ENCODE measurements at regions of chr1 and their contacts with region 1.

Region 1: GRCh38 chr1:72037745-72038343 is 244.5 kb downstream of the NEGR1 start:
- DNase-seq: peak; percentile 41
- H3K4me3 ChIP-seq: no peak overlapping the region
- CTCF ChIP-seq: peak; percentile 64

Region 2: DNA sequence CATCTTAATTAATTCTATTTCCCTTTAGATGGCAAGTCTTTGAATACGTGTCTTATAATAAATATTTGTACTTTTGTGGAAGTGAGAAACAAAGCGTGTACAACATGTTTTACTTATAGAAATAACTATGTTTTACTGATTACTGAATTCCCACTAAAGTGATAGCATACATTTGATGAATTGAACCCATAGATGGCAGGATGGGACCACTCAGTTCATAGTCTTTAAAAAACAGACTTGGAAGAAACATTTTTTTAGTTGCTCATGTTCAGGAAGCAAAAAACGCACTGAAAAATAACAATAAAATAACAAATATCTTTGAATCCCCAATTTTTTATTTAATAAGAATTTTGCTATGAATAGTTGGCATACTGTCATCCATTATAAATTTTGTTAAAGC is 449.9 kb before region 1 on chr1:
- in situ Hi-C with region 1: loop called (anchors 25 kb)
- DNase-seq: peak; percentile 26
- H3K4me3 ChIP-seq: no peak overlapping the region
- CTCF ChIP-seq: peak; percentile 32